Aorta (tissue), 5 donors: ENCODE measurements at regions of chr2 and their contacts with region 1.

Region 1: GRCh38 chr2:191265311-191266170 is 20.3 kb downstream of the MYO1B start:
- DNase-seq: peak in 1 of 2 donors; percentile 53
- ATAC-seq: peak; percentile 76
- H3K4me3 ChIP-seq: no peak overlapping the region
- H3K27ac ChIP-seq: peak overlapping the region; percentile 94 to 95
- H3K4me1 ChIP-seq: peaks cover 11 to 13% of the 10 kb centered on the region in 2 donors
- H3K27me3 ChIP-seq: no peaks in the 10 kb centered on the region

Region 2: GRCh38 chr2:190948671-190949070 is 316.9 kb before region 1 on chr2:
- intact Hi-C with region 1: no loop called
- DNase-seq: no peak
- ATAC-seq: no peak
- H3K4me3 ChIP-seq: no peak overlapping the region
- H3K27ac ChIP-seq: peak overlapping the region in 1 of 2 donors; percentile 71
- H3K4me1 ChIP-seq: peaks cover 3 to 6% of the 10 kb centered on the region in 2 donors
- H3K27me3 ChIP-seq: no peaks in the 10 kb centered on the region

Region 3: DNA sequence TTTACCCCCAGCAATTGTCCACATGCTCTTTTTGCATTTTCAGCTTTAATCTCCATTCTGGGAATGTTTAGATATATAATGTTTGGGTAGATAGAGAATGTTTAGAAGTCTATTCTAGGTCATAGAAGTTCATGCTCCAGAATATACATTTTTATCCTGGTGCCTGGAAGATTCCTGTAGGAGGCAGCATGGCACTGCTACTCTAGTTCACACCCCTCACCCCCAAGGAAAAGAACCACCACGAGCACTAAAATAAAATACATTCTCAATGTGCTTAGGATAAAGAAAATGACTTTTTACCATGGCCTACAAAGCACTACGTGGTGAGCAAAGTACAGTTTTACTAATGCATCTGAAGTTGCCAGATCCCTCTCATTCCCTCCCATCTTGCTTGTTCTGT is 33.5 kb after region 1 on chr2:
- intact Hi-C with region 1: loop called in 1 of 2 experiments (anchors 5 kb)
- DNase-seq: no peak
- ATAC-seq: peak; percentile 20
- H3K4me3 ChIP-seq: no peak overlapping the region
- H3K27ac ChIP-seq: peak overlapping the region in 1 of 2 donors; percentile 82
- H3K4me1 ChIP-seq: peaks cover 7 to 30% of the 10 kb centered on the region in 2 donors
- H3K27me3 ChIP-seq: no peaks in the 10 kb centered on the region

Region 4: GRCh38 chr2:191304939-191305875 is 39.7 kb after region 1 on chr2:
- intact Hi-C with region 1: loop called in 1 of 2 experiments (anchors 5 kb)
- DNase-seq: peak in 1 of 2 donors; percentile 58
- ATAC-seq: peak; percentile 80
- H3K4me3 ChIP-seq: no peak overlapping the region
- H3K27ac ChIP-seq: peak overlapping the region; percentile 23 to 54
- H3K4me1 ChIP-seq: peaks cover 0 to 14% of the 10 kb centered on the region in 2 donors
- H3K27me3 ChIP-seq: no peaks in the 10 kb centered on the region

Region 5: GRCh38 chr2:191582355-191582754 is 316.8 kb after region 1 on chr2:
- intact Hi-C with region 1: no loop called
- DNase-seq: no peak
- ATAC-seq: no peak
- H3K4me3 ChIP-seq: no peak overlapping the region
- H3K27ac ChIP-seq: no peak overlapping the region
- H3K4me1 ChIP-seq: no peaks in the 10 kb centered on the region
- H3K27me3 ChIP-seq: no peaks in the 10 kb centered on the region